T-cell (primary cell): ENCODE measurements at regions of chr10 and their contacts with region 1.

Region 1: GRCh38 chr10:52644373-52645186 is 128.0 kb downstream of the MBL2 start:
- DNase-seq: peak in 1 of 35 experiments; percentile 1
- ATAC-seq: no peak
- H3K4me3 ChIP-seq: no peak overlapping the region
- H3K4me3 Mint-ChIP-seq: no peak overlapping the region
- H3K27ac ChIP-seq: no peak overlapping the region
- H3K27ac Mint-ChIP-seq: no peak overlapping the region
- H3K4me1 ChIP-seq: no peaks in the 10 kb centered on the region
- H3K4me1 Mint-ChIP-seq: no peaks in the 10 kb centered on the region
- H3K27me3 ChIP-seq: no peaks in the 10 kb centered on the region
- H3K27me3 Mint-ChIP-seq: no peaks in the 10 kb centered on the region

Region 2: GRCh38 chr10:52443419-52444388 is 200.9 kb before region 1 on chr10:
- CTCF ChIA-PET with region 1: interaction called in 1 of 2 experiments, 11 read pairs
- POLR2A ChIA-PET with region 1: no interaction called
- DNase-seq: no peak
- ATAC-seq: no peak
- H3K4me3 ChIP-seq: no peak overlapping the region
- H3K4me3 Mint-ChIP-seq: no peak overlapping the region
- H3K27ac ChIP-seq: no peak overlapping the region
- H3K27ac Mint-ChIP-seq: no peak overlapping the region
- H3K4me1 ChIP-seq: no peaks in the 10 kb centered on the region
- H3K4me1 Mint-ChIP-seq: no peaks in the 10 kb centered on the region
- H3K27me3 ChIP-seq: no peaks in the 10 kb centered on the region
- H3K27me3 Mint-ChIP-seq: no peaks in the 10 kb centered on the region